Heart right ventricle (tissue), 16 donors: ENCODE measurements at regions of chr18 and their contacts with region 1.

Region 1: GRCh38 chr18:35277633-35278032 is 12.4 kb downstream of the ZSCAN30 start:
- DNase-seq: no peak
- ATAC-seq: no peak
- H3K4me3 ChIP-seq: no peak overlapping the region
- H3K27ac ChIP-seq: no peak overlapping the region
- H3K4me1 ChIP-seq: peaks cover 0 to 10% (median 0%) of the 10 kb centered on the region in 9 donors
- H3K27me3 ChIP-seq: no peaks in the 10 kb centered on the region
- CTCF ChIP-seq: no peak

Region 2: GRCh38 chr18:34219651-34220050 is 1058.0 kb before region 1 on chr18:
- intact Hi-C with region 1: loop called in 1 of 10 experiments (anchors 10 kb)
- DNase-seq: no peak
- ATAC-seq: no peak
- H3K4me3 ChIP-seq: no peak overlapping the region
- H3K27ac ChIP-seq: no peak overlapping the region
- H3K4me1 ChIP-seq: peaks cover 8 to 30% (median 26%) of the 10 kb centered on the region in 9 donors
- H3K27me3 ChIP-seq: peaks cover 0 to 67% (median 44%) of the 10 kb centered on the region in 7 donors
- CTCF ChIP-seq: no peak

Region 3: DNA sequence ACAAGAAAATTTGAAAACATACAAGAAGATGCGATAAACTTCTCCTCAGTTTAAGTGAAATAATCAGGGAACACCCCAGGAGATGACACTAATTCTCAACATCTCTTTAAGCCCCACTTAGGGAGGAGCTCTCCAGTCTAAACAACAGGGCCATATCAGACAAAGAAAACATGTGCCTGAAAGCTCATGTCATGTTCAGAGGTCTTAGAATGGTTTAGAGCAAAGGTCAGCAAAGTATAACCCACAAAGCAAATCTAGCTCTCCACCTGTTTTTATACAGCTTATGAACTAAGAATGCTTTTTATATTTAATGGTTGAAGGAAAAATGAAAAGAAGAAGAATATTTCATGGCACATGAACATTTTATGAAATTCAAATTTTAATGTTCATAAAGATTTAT is 897.3 kb before region 1 on chr18:
- intact Hi-C with region 1: no loop called
- DNase-seq: no peak
- ATAC-seq: no peak
- H3K4me3 ChIP-seq: no peak overlapping the region
- H3K27ac ChIP-seq: no peak overlapping the region
- H3K4me1 ChIP-seq: no peaks in the 10 kb centered on the region
- H3K27me3 ChIP-seq: no peaks in the 10 kb centered on the region
- CTCF ChIP-seq: no peak